Activated CD8-positive, alpha-beta memory T cell treated with anti-CD3 and anti-CD28 coated beads, Interleukin-2, amount 10 ng/mL, durations not matched to agents 7 days and 5 days (primary cell): ENCODE measurements at regions of chr11 and their contacts with region 1.

Region 1: GRCh38 chr11:10792398-10792975 is 16.2 kb downstream of the EIF4G2 start:
- DNase-seq: peak; percentile 89
- ATAC-seq: peak; percentile 90
- H3K4me3 Mint-ChIP-seq: no peak overlapping the region
- H3K27ac Mint-ChIP-seq: no peak overlapping the region
- H3K4me1 Mint-ChIP-seq: peaks cover 21% of the 10 kb centered on the region
- H3K27me3 Mint-ChIP-seq: peaks cover 16% of the 10 kb centered on the region

Region 2: DNA sequence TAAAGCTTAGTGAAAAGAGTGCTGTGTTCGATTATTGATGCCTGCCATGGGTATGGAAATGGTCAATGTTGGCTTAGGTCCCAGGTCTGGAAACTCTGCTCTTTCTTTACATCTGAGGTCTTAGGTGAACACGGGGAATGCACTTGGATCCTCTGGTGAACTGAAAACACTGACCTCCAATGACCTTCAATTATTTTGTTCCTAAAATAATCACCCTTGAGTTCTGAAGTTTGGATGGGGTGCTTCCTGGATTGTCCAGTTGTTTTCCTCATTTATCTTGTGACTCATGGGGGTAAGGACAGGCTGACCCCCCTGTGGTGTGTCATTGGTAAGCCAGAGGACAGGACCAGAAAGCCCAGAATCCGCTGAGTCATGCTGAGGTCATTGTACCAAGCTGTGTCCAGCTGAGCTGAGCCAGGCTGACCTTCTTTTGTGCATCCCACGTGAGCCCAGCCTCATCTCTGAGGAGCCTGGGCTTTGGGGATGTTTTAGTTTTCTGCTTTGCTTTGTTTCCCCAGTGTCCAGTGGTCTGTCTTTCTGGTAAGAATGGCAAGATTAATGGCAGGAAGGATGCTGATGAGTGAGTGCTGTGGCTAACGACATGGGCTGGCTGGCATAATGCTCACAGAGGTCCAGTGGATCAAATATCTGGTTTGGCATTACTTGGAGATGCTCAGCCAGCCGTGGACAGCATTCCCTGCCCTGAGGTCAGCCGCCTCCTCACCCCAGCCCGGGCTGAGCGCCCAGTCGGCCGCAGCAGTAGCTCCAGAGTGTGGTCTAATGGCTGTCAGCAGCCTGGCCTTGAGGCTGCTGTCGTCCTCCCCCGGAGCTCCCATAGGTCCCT is 301.9 kb before region 1 on chr11:
- CTCF ChIA-PET with region 1: no interaction called
- DNase-seq: no peak
- ATAC-seq: no peak
- H3K4me3 Mint-ChIP-seq: no peak overlapping the region
- H3K27ac Mint-ChIP-seq: no peak overlapping the region
- H3K4me1 Mint-ChIP-seq: peaks cover 16% of the 10 kb centered on the region
- H3K27me3 Mint-ChIP-seq: no peaks in the 10 kb centered on the region

Region 3: DNA sequence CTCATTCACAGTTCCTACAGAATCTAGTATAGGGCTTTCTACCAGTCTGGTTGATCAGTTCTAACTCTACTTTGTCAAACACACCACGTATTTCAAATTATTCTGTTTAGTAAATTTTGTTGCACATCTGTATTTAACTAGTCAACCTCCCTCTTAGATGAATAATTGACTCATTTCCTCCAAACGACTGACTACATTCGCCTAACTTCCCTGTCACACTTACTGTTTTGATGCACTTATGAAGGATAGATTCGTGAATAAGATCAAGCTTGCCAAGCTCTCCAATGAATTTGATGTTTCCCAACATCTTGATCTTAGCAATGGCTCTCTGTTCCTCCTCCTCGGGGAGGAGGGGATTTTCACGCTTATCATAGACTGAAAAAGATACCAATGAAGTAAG is 11.2 kb after region 1 on chr11:
- CTCF ChIA-PET with region 1: interaction called, 38 read pairs
- DNase-seq: no peak
- ATAC-seq: no peak
- H3K4me3 Mint-ChIP-seq: no peak overlapping the region
- H3K27ac Mint-ChIP-seq: peak overlapping the region; percentile 8
- H3K4me1 Mint-ChIP-seq: peaks cover 70% of the 10 kb centered on the region
- H3K27me3 Mint-ChIP-seq: no peaks in the 10 kb centered on the region

Region 4: DNA sequence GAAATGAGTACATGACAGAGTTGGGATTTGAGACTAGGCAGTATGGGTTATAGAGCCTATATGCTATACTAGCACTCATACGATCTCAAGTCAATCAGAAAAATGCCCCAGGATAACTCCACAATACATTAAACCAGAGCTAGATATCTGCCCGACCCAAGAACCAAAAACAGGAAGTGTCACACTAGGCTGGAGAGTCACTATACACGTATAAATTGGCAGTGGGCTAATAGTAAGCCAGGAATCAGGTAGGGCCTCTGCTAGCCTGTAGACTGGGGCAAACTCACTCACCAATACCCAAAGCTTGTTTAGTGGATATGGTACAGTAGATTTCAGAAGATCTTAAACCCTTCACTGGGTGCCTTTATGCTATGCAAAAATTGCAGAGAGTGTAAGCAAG is 32.4 kb after region 1 on chr11:
- CTCF ChIA-PET with region 1: no interaction called
- DNase-seq: no peak
- ATAC-seq: no peak
- H3K4me3 Mint-ChIP-seq: no peak overlapping the region
- H3K27ac Mint-ChIP-seq: no peak overlapping the region
- H3K4me1 Mint-ChIP-seq: no peaks in the 10 kb centered on the region
- H3K27me3 Mint-ChIP-seq: no peaks in the 10 kb centered on the region

Region 5: GRCh38 chr11:10857709-10858438 is 65.4 kb after region 1 on chr11 and contains the start of gene ZBED5:
- CTCF ChIA-PET with region 1: interaction called, 11 read pairs
- DNase-seq: peak; percentile 97
- ATAC-seq: peak; percentile 91
- H3K4me3 Mint-ChIP-seq: peak within 1 kb of the TSS; percentile 98
- H3K27ac Mint-ChIP-seq: peak within 1 kb of the TSS; percentile 100
- H3K4me1 Mint-ChIP-seq: peaks cover 33% of the 10 kb centered on the region
- H3K27me3 Mint-ChIP-seq: no peaks in the 10 kb centered on the region
- total RNA-seq, gene ZBED5: 34.9 to 35.5 TPM

Region 6: GRCh38 chr11:10933455-10934292 is 141.2 kb after region 1 on chr11:
- CTCF ChIA-PET with region 1: interaction called, 28 read pairs
- DNase-seq: peak; percentile 86
- ATAC-seq: peak; percentile 80
- H3K4me3 Mint-ChIP-seq: peak overlapping the region; percentile 66
- H3K27ac Mint-ChIP-seq: no peak overlapping the region
- H3K4me1 Mint-ChIP-seq: peaks cover 20% of the 10 kb centered on the region
- H3K27me3 Mint-ChIP-seq: peaks cover 47% of the 10 kb centered on the region

Region 7: DNA sequence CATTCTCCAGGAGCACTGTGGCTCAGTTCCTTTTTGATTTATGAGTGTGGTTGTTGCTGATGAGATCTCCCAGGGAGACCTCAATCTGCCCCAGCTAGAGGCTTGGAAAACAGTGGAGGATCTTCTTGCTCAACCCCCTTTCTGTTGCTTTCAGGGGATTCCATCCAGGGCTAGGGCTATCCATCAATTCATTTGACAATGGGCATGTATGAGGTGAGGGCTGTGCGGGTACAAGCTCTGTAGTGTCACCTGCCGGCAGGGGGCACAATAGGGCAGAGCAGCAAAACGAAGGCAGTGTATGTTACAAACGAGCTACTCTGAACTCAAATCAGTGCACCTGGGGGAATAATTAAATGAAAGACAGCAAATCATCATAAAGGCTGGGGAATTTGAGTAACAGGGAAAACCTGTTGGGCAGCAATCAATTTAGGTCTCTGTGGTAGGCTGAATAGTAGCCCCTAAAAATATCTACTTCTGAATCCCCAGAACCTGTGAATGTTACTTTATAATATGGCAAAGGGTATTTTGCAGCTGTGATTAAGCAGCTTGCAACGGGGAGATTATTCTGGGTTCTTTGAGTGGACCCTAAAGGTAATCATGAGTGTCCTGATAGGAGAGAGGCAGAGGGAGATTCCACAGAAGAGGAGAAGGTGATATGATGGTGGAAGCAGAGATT is 235.7 kb after region 1 on chr11:
- CTCF ChIA-PET with region 1: interaction called, 33 read pairs
- DNase-seq: peak; percentile 78
- ATAC-seq: peak; percentile 89
- H3K4me3 Mint-ChIP-seq: no peak overlapping the region
- H3K27ac Mint-ChIP-seq: no peak overlapping the region
- H3K4me1 Mint-ChIP-seq: no peaks in the 10 kb centered on the region
- H3K27me3 Mint-ChIP-seq: peaks cover 13% of the 10 kb centered on the region